CD4-positive, alpha-beta T cell (primary cell): ENCODE measurements at regions of chr6 and their contacts with region 1.

Region 1: GRCh38 chr6:45922728-45923351 is 92.8 kb downstream of the CLIC5 start:
- DNase-seq: peak; percentile 13 to 70 (median 34)
- ATAC-seq: peak; percentile 49
- H3K4me3 ChIP-seq: no peak overlapping the region
- H3K4me3 Mint-ChIP-seq: no peak overlapping the region
- H3K27ac ChIP-seq: no peak overlapping the region
- H3K27ac Mint-ChIP-seq: no peak overlapping the region
- H3K4me1 ChIP-seq: no peaks in the 10 kb centered on the region
- H3K4me1 Mint-ChIP-seq: no peaks in the 10 kb centered on the region
- H3K27me3 ChIP-seq: no peaks in the 10 kb centered on the region
- H3K27me3 Mint-ChIP-seq: no peaks in the 10 kb centered on the region
- CTCF ChIP-seq: peak; percentile 58

Region 2: DNA sequence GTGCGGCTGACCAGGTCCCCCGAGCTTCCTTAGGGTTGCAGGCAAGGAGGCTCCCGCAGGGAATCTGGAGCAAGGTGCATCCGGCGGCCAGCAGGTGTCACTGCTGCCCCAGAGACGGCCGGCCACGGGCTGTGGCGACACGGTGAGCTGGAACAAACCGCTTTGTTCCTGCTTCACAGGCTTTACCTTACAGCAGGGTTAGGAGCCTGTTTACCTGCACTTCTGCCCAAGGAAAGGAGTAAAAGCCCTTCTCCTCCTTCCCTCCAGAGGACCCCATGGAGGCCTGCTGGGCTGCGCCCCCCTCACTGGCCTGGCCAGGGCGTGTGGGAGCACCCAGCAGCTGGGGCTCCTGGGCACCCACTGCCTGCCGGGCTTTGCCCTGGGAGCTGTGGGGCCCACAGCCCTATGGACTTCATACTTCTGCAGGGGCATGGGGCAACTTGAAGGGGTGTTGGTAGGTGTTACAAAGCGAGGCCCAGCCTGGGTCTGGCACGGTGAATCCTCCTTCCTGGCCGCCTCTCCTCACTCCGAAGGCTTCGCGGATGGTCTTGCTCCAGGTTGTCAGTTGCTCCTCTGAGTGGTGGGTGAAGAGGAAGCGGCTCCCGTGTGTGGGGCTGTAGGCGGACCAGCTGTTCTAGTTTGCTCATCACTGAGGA is 1446.9 kb before region 1 on chr6:
- CTCF ChIA-PET with region 1: interaction called, 11 read pairs
- POLR2A ChIA-PET with region 1: no interaction called
- intact Hi-C with region 1: loop called in 1 of 2 experiments (anchors 2 kb)
- DNase-seq: peak; percentile 41 to 80 (median 62)
- ATAC-seq: peak; percentile 89
- H3K4me3 ChIP-seq: no peak overlapping the region
- H3K4me3 Mint-ChIP-seq: no peak overlapping the region
- H3K27ac ChIP-seq: no peak overlapping the region
- H3K27ac Mint-ChIP-seq: no peak overlapping the region
- H3K4me1 ChIP-seq: peaks cover 9% of the 10 kb centered on the region
- H3K4me1 Mint-ChIP-seq: peaks cover 5% of the 10 kb centered on the region
- H3K27me3 ChIP-seq: peaks cover 0 to 5% of the 10 kb centered on the region in 2 experiments
- H3K27me3 Mint-ChIP-seq: no peaks in the 10 kb centered on the region
- CTCF ChIP-seq: peak; percentile 85

Region 3: DNA sequence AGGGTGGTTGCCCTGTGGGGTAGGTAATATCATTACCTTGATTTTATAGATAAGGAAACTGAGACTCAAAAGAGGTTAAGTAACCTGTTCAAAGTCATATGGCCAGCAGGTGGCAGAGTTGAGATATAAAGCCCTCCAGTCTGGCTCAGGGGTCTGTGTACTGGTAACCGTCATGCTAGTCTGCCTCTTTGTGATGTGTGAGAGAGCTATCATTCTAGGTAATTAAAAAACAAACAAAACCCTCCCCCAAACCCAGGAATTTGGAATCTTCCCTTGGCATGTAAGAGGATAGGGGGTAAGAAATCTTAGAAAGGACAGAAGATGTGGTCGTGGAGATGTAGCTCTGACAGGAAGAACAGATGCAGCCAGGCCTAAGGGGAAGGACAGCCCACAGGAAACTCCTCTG is 1329.3 kb before region 1 on chr6:
- CTCF ChIA-PET with region 1: no interaction called
- POLR2A ChIA-PET with region 1: no interaction called
- intact Hi-C with region 1: loop called (anchors 2 kb)
- DNase-seq: peak; percentile 3 to 71 (median 32)
- ATAC-seq: peak; percentile 44
- H3K4me3 ChIP-seq: no peak overlapping the region
- H3K4me3 Mint-ChIP-seq: no peak overlapping the region
- H3K27ac ChIP-seq: no peak overlapping the region
- H3K27ac Mint-ChIP-seq: no peak overlapping the region
- H3K4me1 ChIP-seq: no peaks in the 10 kb centered on the region
- H3K4me1 Mint-ChIP-seq: no peaks in the 10 kb centered on the region
- H3K27me3 ChIP-seq: peaks cover 0 to 5% of the 10 kb centered on the region in 2 experiments
- H3K27me3 Mint-ChIP-seq: peaks cover 13% of the 10 kb centered on the region
- CTCF ChIP-seq: peak; percentile 60

Region 4: DNA sequence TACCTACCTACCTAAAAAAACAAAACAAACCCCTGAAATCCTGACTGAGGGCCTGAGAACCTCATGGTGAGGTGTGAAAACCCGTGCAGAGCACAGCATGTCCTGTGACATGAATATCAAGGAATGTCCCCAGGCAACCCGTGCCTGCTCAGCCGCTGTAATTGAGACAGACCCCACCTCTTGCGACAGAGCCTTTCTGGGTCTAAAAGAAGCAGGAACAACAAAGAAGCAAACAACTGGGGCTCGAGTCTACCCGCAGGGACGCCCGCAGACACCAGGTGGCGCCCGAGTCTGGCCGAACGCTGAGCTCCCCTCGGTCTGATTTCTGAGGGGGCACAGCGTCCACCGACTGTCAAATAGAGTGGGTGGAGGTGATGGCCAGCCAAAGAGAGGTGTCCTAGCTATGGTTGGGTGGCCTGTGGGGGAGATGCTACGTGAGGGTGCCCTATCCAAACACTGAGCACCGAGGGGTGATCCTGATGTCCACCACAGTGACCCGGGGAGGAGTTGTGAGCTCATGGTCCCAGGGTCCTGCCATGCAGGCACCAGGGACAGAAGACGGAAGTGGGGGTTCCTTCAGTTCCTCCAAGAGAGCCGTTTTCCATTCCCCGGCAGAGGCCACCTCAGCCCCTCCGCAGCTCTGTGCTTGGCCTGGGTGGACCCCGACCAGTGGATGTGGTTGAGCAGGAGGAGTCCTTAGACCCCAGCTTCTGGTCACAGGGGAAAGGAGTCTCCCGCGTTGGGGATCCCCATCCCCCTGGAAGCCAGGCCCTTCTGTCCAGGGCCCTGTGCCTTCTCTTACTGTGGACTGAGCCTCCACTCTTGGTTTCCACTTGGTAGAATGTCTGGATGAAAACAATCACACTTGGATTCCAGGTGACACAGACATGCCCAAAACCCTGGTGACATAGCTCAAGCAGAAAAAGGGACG is 1267.2 kb before region 1 on chr6:
- CTCF ChIA-PET with region 1: interaction called, 8 read pairs
- POLR2A ChIA-PET with region 1: no interaction called
- intact Hi-C with region 1: loop called (anchors 1 to 2 kb)
- DNase-seq: peak; percentile 51 to 82 (median 64)
- ATAC-seq: peak; percentile 79
- H3K4me3 ChIP-seq: no peak overlapping the region
- H3K4me3 Mint-ChIP-seq: no peak overlapping the region
- H3K27ac ChIP-seq: no peak overlapping the region
- H3K27ac Mint-ChIP-seq: peak overlapping the region; percentile 51
- H3K4me1 ChIP-seq: peaks cover 10% of the 10 kb centered on the region
- H3K4me1 Mint-ChIP-seq: peaks cover 8% of the 10 kb centered on the region
- H3K27me3 ChIP-seq: peaks cover 0 to 3% of the 10 kb centered on the region in 2 experiments
- H3K27me3 Mint-ChIP-seq: peaks cover 3% of the 10 kb centered on the region
- CTCF ChIP-seq: peak; percentile 95

Region 5: DNA sequence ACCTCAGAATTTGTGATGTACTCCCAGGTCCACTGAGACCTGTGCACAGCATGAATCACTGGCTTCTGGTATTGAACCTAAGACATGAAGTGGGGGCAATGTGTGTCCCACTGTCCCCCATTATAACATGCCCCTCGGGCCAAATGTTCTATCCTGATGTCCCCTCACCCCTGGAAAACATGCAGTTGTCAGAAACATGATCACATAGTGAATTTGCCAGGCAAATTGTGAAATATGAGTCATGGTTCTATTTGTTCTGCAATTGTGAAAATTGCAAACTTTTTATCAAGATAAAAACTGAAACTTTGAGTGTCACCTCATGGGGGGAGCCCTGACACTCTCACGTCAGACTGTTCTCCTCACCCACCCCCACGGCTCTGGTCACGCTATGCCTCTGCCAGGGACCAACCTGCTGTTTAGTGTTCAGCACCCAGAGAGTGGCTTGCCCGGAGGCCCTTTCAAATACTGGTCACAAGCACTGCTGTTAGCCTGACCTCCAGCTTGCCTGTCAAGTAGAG is 212.5 kb before region 1 on chr6:
- CTCF ChIA-PET with region 1: no interaction called
- POLR2A ChIA-PET with region 1: no interaction called
- intact Hi-C with region 1: no loop called
- DNase-seq: peak in 4 of 14 experiments; percentile 2 to 73 (median 59)
- ATAC-seq: no peak
- H3K4me3 ChIP-seq: no peak overlapping the region
- H3K4me3 Mint-ChIP-seq: no peak overlapping the region
- H3K27ac ChIP-seq: no peak overlapping the region
- H3K27ac Mint-ChIP-seq: no peak overlapping the region
- H3K4me1 ChIP-seq: peaks cover 32% of the 10 kb centered on the region
- H3K4me1 Mint-ChIP-seq: peaks cover 22% of the 10 kb centered on the region
- H3K27me3 ChIP-seq: no peaks in the 10 kb centered on the region
- H3K27me3 Mint-ChIP-seq: peaks cover 5% of the 10 kb centered on the region
- CTCF ChIP-seq: no peak

Region 6: GRCh38 chr6:45854149-45854742 is 68.6 kb before region 1 on chr6:
- CTCF ChIA-PET with region 1: no interaction called
- POLR2A ChIA-PET with region 1: no interaction called
- intact Hi-C with region 1: no loop called
- DNase-seq: no peak
- ATAC-seq: no peak
- H3K4me3 ChIP-seq: no peak overlapping the region
- H3K4me3 Mint-ChIP-seq: no peak overlapping the region
- H3K27ac ChIP-seq: no peak overlapping the region
- H3K27ac Mint-ChIP-seq: no peak overlapping the region
- H3K4me1 ChIP-seq: no peaks in the 10 kb centered on the region
- H3K4me1 Mint-ChIP-seq: no peaks in the 10 kb centered on the region
- H3K27me3 ChIP-seq: peaks cover 0 to 5% of the 10 kb centered on the region in 2 experiments
- H3K27me3 Mint-ChIP-seq: peaks cover 14% of the 10 kb centered on the region
- CTCF ChIP-seq: no peak